ENCODE measurements at regions of chr7 and their contacts with region 1.

Region 1: DNA sequence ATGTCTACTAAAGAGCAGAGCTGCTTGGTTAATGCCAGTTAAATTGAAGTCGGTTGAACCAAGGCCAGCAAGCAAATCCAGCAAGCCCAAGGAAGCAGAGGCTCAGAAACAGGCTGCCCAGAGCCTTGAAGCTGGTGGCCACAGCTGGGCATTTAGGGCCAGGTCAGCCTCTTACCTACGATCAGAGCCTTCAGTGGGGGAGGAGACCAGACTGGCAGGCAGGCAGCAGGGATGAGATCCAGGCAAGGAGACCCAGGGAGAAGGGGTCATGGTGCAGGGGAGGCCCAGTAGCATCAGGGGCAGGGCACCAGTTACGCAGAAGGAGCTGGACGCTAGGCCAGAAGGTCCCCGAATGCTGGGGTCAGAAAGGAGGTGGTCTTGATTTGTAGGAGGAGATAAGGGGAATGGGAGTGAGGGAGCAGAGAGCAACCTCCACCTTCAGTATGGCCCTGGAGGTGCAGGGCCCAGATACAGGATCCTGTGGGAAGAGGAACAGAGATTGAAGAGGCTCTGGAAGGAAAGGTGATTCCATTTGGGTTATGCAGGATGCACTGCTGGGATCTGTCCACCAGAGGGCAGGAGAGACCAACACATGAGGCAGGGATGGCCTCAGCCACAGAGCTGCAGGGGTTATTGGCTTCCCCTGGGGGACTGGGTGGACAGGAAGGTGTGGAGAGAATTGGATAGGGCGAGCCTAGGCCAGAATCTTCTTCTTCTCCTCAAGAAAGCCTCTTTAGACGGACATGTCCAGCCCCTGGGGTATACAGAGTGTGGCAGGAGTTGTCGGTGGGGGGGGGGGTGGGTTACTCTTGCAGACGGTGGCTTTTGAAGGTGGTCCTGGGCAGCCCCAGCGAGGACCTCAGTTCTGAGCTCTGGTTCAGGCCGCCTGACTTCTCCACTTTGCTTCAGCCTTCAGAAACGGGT is 132.6 kb upstream of the PODXL start:
- DNase-seq: peak; percentile 75 to 95
- H3K4me3 ChIP-seq: no peak overlapping the region
- H3K27ac ChIP-seq: no peak overlapping the region
- H3K4me1 ChIP-seq: peaks cover 0 to 9% (median 2%) of the 10 kb centered on the region in 4 experiments; a peak in 5 of 7 replicates
- H3K27me3 ChIP-seq: peaks cover 0 to 7% (median 3%) of the 10 kb centered on the region in 4 experiments; a peak in 1 of 7 replicates
- CTCF ChIP-seq: peak; percentile 96 to 99 (median 99)
- EP300 ChIP-seq: no peak
- POLR2A ChIP-seq: no peak
- RAD21 ChIP-seq: peak; percentile 99 to 100

Region 2: DNA sequence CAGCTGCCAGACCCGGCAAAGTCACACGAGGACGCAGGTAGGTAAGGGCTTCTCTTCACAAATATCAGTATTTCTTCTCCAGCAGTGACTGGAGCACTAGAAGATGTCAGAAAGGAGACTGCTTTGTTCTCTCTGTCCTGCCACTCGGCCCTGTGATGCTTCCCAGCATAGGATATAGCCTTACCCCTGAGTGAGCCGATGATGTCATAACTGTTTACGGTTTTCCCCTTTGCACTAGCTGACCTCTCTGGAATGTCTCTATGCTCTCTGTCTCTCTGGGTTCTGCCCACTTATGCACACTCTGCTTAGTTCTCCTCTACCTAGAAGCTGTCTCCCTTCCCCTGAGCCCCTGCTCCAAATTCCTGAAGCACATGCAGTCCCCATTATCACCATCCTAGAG is 34.9 kb after region 1 on chr7:
- CTCF ChIA-PET with region 1: interaction called, 15 read pairs
- POLR2A ChIA-PET with region 1: no interaction called
- DNase-seq: peak in 1 of 2 experiments; percentile 40
- H3K4me3 ChIP-seq: no peak overlapping the region
- H3K27ac ChIP-seq: no peak overlapping the region; the same call in 1 of the 2 replicates
- H3K4me1 ChIP-seq: peaks cover 0 to 2% (median 0%) of the 10 kb centered on the region in 4 experiments; a peak in 1 of 7 replicates
- H3K27me3 ChIP-seq: no peaks in the 10 kb centered on the region
- CTCF ChIP-seq: no peak
- EP300 ChIP-seq: no peak
- POLR2A ChIP-seq: no peak
- RAD21 ChIP-seq: no peak

Region 3: GRCh38 chr7:131753620-131754222 is 64.7 kb after region 1 on chr7:
- CTCF ChIA-PET with region 1: interaction called, 12 read pairs
- POLR2A ChIA-PET with region 1: no interaction called
- DNase-seq: peak; percentile 21 to 66
- H3K4me3 ChIP-seq: no peak overlapping the region
- H3K27ac ChIP-seq: no peak overlapping the region
- H3K4me1 ChIP-seq: no peaks in the 10 kb centered on the region
- H3K27me3 ChIP-seq: no peaks in the 10 kb centered on the region
- CTCF ChIP-seq: peak; percentile 65 to 79 (median 76)
- EP300 ChIP-seq: no peak
- POLR2A ChIP-seq: no peak
- RAD21 ChIP-seq: peak; percentile 64 to 67

Region 4: GRCh38 chr7:131843898-131844331 is 154.9 kb after region 1 on chr7:
- CTCF ChIA-PET with region 1: interaction called, 18 read pairs
- POLR2A ChIA-PET with region 1: no interaction called
- DNase-seq: no peak
- H3K4me3 ChIP-seq: no peak overlapping the region
- H3K27ac ChIP-seq: no peak overlapping the region
- H3K4me1 ChIP-seq: 0 out of 7 replicates have a peak, but pooled peaks cover 0 to 2% (median 0%) of the 10 kb centered on the region in 4 experiments
- H3K27me3 ChIP-seq: no peaks in the 10 kb centered on the region; a peak in 1 of 7 replicates
- CTCF ChIP-seq: no peak
- EP300 ChIP-seq: no peak
- POLR2A ChIP-seq: no peak
- RAD21 ChIP-seq: no peak

Region 5: DNA sequence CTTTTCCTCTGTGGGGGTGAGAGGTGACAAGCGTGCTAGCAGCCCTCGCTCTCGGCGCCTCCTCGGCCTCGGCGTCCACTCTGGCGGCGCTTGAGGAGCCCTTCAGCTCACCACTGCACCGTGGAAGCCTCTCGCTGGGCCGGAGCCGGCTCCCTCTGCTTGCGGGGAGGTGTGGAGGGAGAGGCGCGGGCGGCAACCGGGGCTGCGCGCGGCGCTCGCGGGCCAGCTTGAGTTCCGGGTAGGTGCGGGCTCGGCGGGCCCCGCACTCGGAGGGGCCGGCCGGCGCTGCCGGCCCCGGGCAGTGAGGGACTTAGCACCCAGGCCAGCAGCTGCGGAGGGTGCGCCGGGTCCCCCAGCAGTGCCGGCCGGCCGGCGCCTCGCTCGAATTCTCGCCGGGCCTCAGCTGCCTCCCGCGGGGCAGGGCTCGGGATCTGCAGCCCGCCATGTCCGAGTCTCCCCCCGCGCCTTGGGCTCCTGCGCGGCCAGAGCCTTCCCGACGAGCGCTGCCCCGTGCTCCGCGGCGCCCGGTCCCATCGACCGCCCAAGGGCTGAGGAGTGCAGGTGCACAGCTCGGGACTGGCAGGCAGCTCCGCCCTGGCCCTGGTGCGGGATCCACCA is 220.3 kb after region 1 on chr7:
- CTCF ChIA-PET with region 1: interaction called, 28 read pairs
- POLR2A ChIA-PET with region 1: no interaction called
- DNase-seq: peak in 1 of 2 experiments; percentile 42
- H3K4me3 ChIP-seq: peak overlapping the region; percentile 26 to 57 (median 34)
- H3K27ac ChIP-seq: no peak overlapping the region
- H3K4me1 ChIP-seq: no peaks in the 10 kb centered on the region
- H3K27me3 ChIP-seq: peaks cover 10 to 32% (median 27%) of the 10 kb centered on the region in 4 experiments
- CTCF ChIP-seq: no peak
- EP300 ChIP-seq: no peak
- POLR2A ChIP-seq: no peak
- RAD21 ChIP-seq: no peak

Region 6: DNA sequence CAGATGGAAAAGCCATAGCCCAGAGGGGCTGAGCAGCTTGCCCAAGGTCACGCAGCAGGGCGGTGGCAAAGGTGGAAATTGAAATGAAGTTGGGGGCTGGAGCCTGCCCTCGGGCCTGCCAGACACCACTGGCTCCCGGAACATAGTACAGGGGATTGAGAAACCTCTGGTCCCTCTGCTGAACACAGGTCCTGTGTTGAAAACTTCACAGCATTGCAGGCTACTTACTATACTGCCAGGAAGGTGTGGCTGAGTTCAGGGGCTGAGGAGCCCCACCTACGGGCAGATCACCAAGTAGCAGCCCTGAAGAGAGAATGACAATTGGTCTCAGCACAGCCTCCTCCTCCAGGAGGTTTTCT is 560.6 kb after region 1 on chr7:
- CTCF ChIA-PET with region 1: interaction called, 11 read pairs
- POLR2A ChIA-PET with region 1: no interaction called
- DNase-seq: peak; percentile 44 to 56
- H3K4me3 ChIP-seq: no peak overlapping the region
- H3K27ac ChIP-seq: no peak overlapping the region
- H3K4me1 ChIP-seq: peaks cover 6 to 17% (median 15%) of the 10 kb centered on the region in 4 experiments; a peak in 6 of 7 replicates
- H3K27me3 ChIP-seq: no peaks in the 10 kb centered on the region; a peak in 1 of 7 replicates
- CTCF ChIP-seq: peak; percentile 60 to 82 (median 76)
- EP300 ChIP-seq: no peak
- POLR2A ChIP-seq: no peak
- RAD21 ChIP-seq: peak; percentile 77 to 88

Measured in H1 (cell line).